CD8-positive, alpha-beta memory T cell (primary cell): ENCODE measurements at regions of chr3 and their contacts with region 1.

Region 1: GRCh38 chr3:188236271-188236670 is 82.3 kb downstream of the LPP start:
- DNase-seq: no peak
- H3K4me3 ChIP-seq: no peak overlapping the region
- H3K4me3 Mint-ChIP-seq: no peak overlapping the region
- H3K27ac ChIP-seq: no peak overlapping the region
- H3K27ac Mint-ChIP-seq: peak overlapping the region in 1 of 8 donors; percentile 13
- H3K4me1 ChIP-seq: no peaks in the 10 kb centered on the region
- H3K4me1 Mint-ChIP-seq: peaks cover 21 to 35% (median 24%) of the 10 kb centered on the region in 3 donors
- H3K27me3 ChIP-seq: no peaks in the 10 kb centered on the region
- H3K27me3 Mint-ChIP-seq: peaks cover 0 to 2% of the 10 kb centered on the region in 2 donors

Region 2: GRCh38 chr3:188067932-188068331 is 168.3 kb before region 1 on chr3:
- CTCF ChIA-PET with region 1: no interaction called
- POLR2A ChIA-PET with region 1: no interaction called
- DNase-seq: no peak
- H3K4me3 ChIP-seq: no peak overlapping the region
- H3K4me3 Mint-ChIP-seq: no peak overlapping the region
- H3K27ac ChIP-seq: no peak overlapping the region
- H3K27ac Mint-ChIP-seq: no peak overlapping the region
- H3K4me1 ChIP-seq: no peaks in the 10 kb centered on the region
- H3K4me1 Mint-ChIP-seq: peaks cover 0 to 4% (median 3%) of the 10 kb centered on the region in 3 donors
- H3K27me3 ChIP-seq: no peaks in the 10 kb centered on the region
- H3K27me3 Mint-ChIP-seq: peaks cover 0 to 3% of the 10 kb centered on the region in 2 donors

Region 3: GRCh38 chr3:188111002-188111584 is 125.2 kb before region 1 on chr3:
- CTCF ChIA-PET with region 1: no interaction called
- POLR2A ChIA-PET with region 1: no interaction called
- DNase-seq: no peak
- H3K4me3 ChIP-seq: no peak overlapping the region
- H3K4me3 Mint-ChIP-seq: no peak overlapping the region
- H3K27ac ChIP-seq: no peak overlapping the region
- H3K27ac Mint-ChIP-seq: peak overlapping the region in 1 of 8 donors; percentile 5
- H3K4me1 ChIP-seq: no peaks in the 10 kb centered on the region
- H3K4me1 Mint-ChIP-seq: peaks cover 6 to 7% (median 7%) of the 10 kb centered on the region in 3 donors
- H3K27me3 ChIP-seq: no peaks in the 10 kb centered on the region
- H3K27me3 Mint-ChIP-seq: peaks cover 3 to 8% of the 10 kb centered on the region in 2 donors

Region 4: GRCh38 chr3:188362405-188362831 is 126.1 kb after region 1 on chr3:
- CTCF ChIA-PET with region 1: no interaction called
- POLR2A ChIA-PET with region 1: interaction called, 19 read pairs
- DNase-seq: peak in 2 of 5 donors; percentile 27 to 45
- H3K4me3 ChIP-seq: no peak overlapping the region
- H3K4me3 Mint-ChIP-seq: peak overlapping the region; percentile 8 to 84 (median 69)
- H3K27ac ChIP-seq: no peak overlapping the region
- H3K27ac Mint-ChIP-seq: peak overlapping the region; percentile 23 to 90 (median 82)
- H3K4me1 ChIP-seq: peaks cover 40% of the 10 kb centered on the region
- H3K4me1 Mint-ChIP-seq: peaks cover 51 to 57% (median 53%) of the 10 kb centered on the region in 3 donors
- H3K27me3 ChIP-seq: no peaks in the 10 kb centered on the region
- H3K27me3 Mint-ChIP-seq: no peaks in the 10 kb centered on the region